ENCODE measurements at regions of chr12 and their contacts with region 1.

Region 1: GRCh38 chr12:58540480-58541299 is 379.6 kb downstream of the LRIG3 start:
- DNase-seq: peak; percentile 83
- H3K4me3 ChIP-seq: no peak overlapping the region
- H3K4me3 Mint-ChIP-seq: no peak overlapping the region
- H3K27ac Mint-ChIP-seq: no peak overlapping the region
- H3K4me1 ChIP-seq: peaks cover 31% of the 10 kb centered on the region
- H3K4me1 Mint-ChIP-seq: peaks cover 28% of the 10 kb centered on the region
- H3K27me3 ChIP-seq: no peaks in the 10 kb centered on the region
- H3K27me3 Mint-ChIP-seq: no peaks in the 10 kb centered on the region
- CTCF ChIP-seq: peak; percentile 72 to 86

Region 2: DNA sequence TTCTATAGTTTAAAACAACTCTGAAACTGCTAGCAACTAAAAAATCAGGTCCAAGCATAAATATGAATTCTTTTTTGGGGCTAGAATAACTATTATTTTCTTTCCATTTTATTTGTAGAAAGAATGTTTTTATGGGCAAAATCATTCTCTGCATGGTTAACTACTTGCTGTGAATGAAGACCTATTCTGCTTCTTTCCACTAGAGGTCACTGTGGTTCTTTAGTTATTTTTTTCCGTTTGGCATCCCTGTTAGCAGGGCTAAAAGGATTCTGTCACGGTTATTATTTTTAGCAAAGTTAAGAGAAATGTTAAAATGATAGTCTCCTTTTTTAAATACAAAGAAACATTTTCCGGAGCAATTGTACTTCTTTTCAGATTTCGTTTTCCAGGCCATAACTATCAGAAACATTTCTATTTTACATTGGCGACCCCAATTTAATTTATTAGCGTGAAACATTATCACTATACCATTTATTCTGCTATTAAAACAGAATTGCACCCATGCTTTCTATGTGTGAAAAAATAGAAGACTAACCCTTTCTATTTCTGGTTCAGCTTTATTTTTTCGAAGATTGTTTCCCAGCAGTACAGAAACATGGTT is 194.6 kb before region 1 on chr12:
- CTCF ChIA-PET with region 1: no interaction called
- POLR2A ChIA-PET with region 1: no interaction called
- intact Hi-C with region 1: loop called (anchors 1 kb)
- DNase-seq: peak in 1 of 2 experiments; percentile 23
- H3K4me3 ChIP-seq: no peak overlapping the region
- H3K4me3 Mint-ChIP-seq: no peak overlapping the region
- H3K27ac Mint-ChIP-seq: no peak overlapping the region
- H3K4me1 ChIP-seq: peaks cover 17% of the 10 kb centered on the region
- H3K4me1 Mint-ChIP-seq: no peaks in the 10 kb centered on the region
- H3K27me3 ChIP-seq: no peaks in the 10 kb centered on the region
- H3K27me3 Mint-ChIP-seq: no peaks in the 10 kb centered on the region
- CTCF ChIP-seq: peak; percentile 72 to 79

Region 3: DNA sequence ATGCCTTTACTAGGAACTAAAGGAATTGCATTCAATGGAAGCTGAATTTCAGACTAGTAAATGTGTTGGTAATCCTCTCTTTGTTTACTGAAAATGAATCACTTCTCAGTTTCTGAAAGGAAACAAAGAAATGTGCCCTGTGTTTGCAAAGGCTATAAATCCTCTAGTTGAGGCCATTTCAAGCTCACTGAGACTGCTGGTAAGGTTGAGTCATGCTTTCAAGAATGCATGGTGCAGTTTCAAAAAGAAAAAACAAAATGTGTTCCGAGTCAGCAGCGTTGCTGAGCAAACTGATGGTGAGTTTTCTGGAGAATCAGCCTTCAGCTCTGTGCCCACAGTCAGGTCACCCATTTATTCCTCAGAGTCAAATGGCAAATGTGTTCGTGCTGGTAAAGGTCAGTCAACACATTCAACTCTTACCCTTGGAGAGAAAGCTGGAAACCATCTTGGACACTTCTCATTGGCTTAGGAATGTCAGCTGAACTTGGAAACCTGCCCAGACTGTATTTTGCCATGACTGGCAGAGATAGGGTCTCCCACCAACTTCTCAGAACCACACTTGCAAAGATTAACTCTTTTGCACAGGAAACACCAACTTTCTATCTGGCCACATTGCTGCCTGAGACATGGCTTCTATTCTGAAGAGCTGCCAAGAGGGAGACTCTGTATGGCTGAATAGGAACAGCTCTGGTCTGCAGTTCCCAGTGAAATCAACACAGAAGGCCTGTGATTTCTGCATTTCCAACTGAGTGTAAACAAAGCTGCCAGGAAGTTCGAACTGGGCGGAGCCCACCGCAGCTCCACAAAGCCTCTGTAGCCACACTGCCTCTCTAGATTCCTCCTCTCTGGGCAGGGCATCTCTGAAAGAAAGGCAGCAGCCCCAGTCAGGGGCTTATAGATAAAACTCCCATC is 115.0 kb before region 1 on chr12:
- CTCF ChIA-PET with region 1: interaction called, 3 read pairs
- POLR2A ChIA-PET with region 1: no interaction called
- intact Hi-C with region 1: loop called (anchors 1 kb)
- DNase-seq: peak; percentile 47 to 69
- H3K4me3 ChIP-seq: no peak overlapping the region
- H3K4me3 Mint-ChIP-seq: peak overlapping the region; percentile 38
- H3K27ac Mint-ChIP-seq: peak overlapping the region; percentile 94
- H3K4me1 ChIP-seq: peaks cover 29% of the 10 kb centered on the region
- H3K4me1 Mint-ChIP-seq: peaks cover 11% of the 10 kb centered on the region
- H3K27me3 ChIP-seq: no peaks in the 10 kb centered on the region
- H3K27me3 Mint-ChIP-seq: no peaks in the 10 kb centered on the region
- CTCF ChIP-seq: no peak

Region 4: GRCh38 chr12:58804749-58805148 is 264.1 kb after region 1 on chr12:
- CTCF ChIA-PET with region 1: interaction called, 4 read pairs
- POLR2A ChIA-PET with region 1: no interaction called
- intact Hi-C with region 1: loop called (anchors 2 kb)
- DNase-seq: peak in 1 of 2 experiments; percentile 4
- H3K4me3 ChIP-seq: no peak overlapping the region
- H3K4me3 Mint-ChIP-seq: no peak overlapping the region
- H3K27ac Mint-ChIP-seq: no peak overlapping the region
- H3K4me1 ChIP-seq: no peaks in the 10 kb centered on the region
- H3K4me1 Mint-ChIP-seq: no peaks in the 10 kb centered on the region
- H3K27me3 ChIP-seq: no peaks in the 10 kb centered on the region
- H3K27me3 Mint-ChIP-seq: no peaks in the 10 kb centered on the region
- CTCF ChIP-seq: peak; percentile 42 to 57

Region 5: GRCh38 chr12:59087077-59087673 is 546.5 kb after region 1 on chr12:
- CTCF ChIA-PET with region 1: interaction called, 4 read pairs
- POLR2A ChIA-PET with region 1: no interaction called
- intact Hi-C with region 1: loop called (anchors 1 kb)
- DNase-seq: no peak
- H3K4me3 ChIP-seq: no peak overlapping the region
- H3K4me3 Mint-ChIP-seq: no peak overlapping the region
- H3K27ac Mint-ChIP-seq: no peak overlapping the region
- H3K4me1 ChIP-seq: no peaks in the 10 kb centered on the region
- H3K4me1 Mint-ChIP-seq: no peaks in the 10 kb centered on the region
- H3K27me3 ChIP-seq: no peaks in the 10 kb centered on the region
- H3K27me3 Mint-ChIP-seq: no peaks in the 10 kb centered on the region
- CTCF ChIP-seq: peak in 1 of 2 experiments; percentile 14

Region 6: GRCh38 chr12:59097876-59098275 is 557.2 kb after region 1 on chr12:
- CTCF ChIA-PET with region 1: no interaction called
- POLR2A ChIA-PET with region 1: no interaction called
- intact Hi-C with region 1: no loop called
- DNase-seq: no peak
- H3K4me3 ChIP-seq: no peak overlapping the region
- H3K4me3 Mint-ChIP-seq: no peak overlapping the region
- H3K27ac Mint-ChIP-seq: no peak overlapping the region
- H3K4me1 ChIP-seq: no peaks in the 10 kb centered on the region
- H3K4me1 Mint-ChIP-seq: no peaks in the 10 kb centered on the region
- H3K27me3 ChIP-seq: no peaks in the 10 kb centered on the region
- H3K27me3 Mint-ChIP-seq: no peaks in the 10 kb centered on the region
- CTCF ChIP-seq: no peak

Region 7: DNA sequence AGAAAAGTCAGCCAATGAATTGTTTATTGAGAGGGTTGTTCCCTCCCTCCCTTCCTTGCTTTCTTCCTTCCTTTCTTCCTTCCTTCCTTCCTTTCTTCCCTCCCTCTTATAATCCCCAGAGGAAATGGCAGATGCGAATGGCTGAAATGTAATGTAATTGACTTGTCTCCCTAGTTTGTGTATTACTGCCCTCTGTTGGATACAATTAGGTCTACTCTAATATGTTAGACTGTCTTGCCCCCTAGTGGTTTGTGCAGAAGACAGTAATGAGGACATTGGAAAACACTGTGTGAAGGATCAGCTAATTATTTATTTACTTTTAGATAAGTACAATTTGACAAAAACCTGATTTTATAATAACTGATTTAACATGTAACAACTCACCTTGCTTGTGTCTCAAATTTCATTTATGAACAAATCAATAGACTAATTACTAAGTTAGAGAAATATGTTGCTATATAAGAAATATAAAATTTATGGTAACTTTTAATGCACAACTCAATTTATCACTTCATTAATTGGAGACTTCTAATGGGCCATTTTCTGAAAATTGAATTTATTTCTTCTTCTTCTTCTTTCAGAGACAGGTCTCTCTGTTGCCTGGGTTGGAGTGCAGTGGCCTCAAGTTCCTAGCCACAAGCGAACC is 609.4 kb after region 1 on chr12:
- CTCF ChIA-PET with region 1: interaction called, 4 read pairs
- POLR2A ChIA-PET with region 1: no interaction called
- intact Hi-C with region 1: loop called (anchors 1 kb)
- DNase-seq: peak in 1 of 2 experiments; percentile 67
- H3K4me3 ChIP-seq: no peak overlapping the region
- H3K4me3 Mint-ChIP-seq: no peak overlapping the region
- H3K27ac Mint-ChIP-seq: no peak overlapping the region
- H3K4me1 ChIP-seq: no peaks in the 10 kb centered on the region
- H3K4me1 Mint-ChIP-seq: peaks cover 17% of the 10 kb centered on the region
- H3K27me3 ChIP-seq: no peaks in the 10 kb centered on the region
- H3K27me3 Mint-ChIP-seq: no peaks in the 10 kb centered on the region
- CTCF ChIP-seq: peak; percentile 86 to 95

Measured in Caco-2 (cell line).